ENCODE measurements at regions of chr1 and their contacts with region 1.

Region 1: GRCh38 chr1:221381910-221382623 is 359.8 kb downstream of the DUSP10 start:
- DNase-seq: no peak

Region 2: GRCh38 chr1:220750131-220750515 is 631.9 kb before region 1 on chr1:
- intact Hi-C with region 1: no loop called
- DNase-seq: no peak

Region 3: DNA sequence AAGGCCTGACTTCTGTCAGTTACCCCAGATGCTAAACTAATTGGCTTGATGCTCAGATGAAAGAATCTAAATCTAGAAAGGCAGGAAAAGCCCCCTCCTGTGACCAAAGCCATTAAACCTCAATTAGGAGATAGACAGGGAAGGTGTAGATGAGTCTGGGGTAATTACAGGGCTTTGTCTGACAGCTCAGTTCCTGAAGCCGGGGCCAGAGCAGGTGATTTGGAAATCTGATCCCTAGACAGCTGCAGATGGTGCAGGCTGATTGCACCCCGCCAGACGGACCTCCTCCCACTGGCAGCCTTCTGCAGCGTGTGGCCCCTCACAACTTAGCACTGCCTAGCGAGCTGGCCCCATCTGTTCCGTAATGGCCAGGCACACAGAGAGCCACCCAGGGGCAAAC is 107.7 kb before region 1 on chr1:
- intact Hi-C with region 1: no loop called
- DNase-seq: no peak

Region 4: DNA sequence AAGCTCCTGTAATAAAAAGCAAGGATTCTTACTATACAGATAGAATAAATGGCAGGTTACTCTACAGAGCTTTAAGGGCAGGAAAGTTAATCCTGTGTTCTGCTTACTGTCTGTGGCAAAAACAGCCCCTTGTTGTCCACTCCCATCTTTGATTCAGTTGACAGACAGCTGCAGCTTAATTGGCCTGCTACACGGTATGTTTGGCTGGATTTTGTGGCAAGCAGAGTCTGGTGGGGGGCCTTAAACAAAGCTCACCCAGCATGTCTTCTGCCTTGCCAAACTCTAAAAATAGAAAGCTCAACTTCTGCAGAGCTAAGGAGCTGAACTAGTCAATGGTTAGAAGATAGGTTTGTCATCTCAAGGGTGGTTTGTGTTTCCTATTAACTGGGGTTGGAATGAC is 95.7 kb before region 1 on chr1:
- intact Hi-C with region 1: no loop called
- DNase-seq: no peak

Region 5: DNA sequence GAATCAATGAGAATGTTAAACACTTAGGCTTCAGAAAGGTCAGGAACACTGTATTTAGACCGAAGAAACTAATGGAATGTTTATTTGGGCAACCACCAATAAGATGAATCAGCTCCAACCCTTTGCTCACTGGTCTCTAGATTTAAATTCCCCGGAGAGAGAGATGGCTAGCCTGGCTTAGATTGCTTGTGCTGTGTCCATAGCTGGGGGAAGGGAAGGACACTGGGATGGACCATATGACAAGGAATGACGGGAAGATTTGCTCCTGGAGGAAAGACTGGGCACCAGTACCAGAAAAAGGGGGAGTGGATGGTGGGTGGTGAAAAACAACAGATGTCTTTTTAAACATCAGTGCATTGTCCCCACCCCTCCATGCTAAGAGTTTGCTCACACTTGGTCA is 66.7 kb before region 1 on chr1:
- intact Hi-C with region 1: no loop called
- DNase-seq: no peak

Region 6: GRCh38 chr1:221350091-221350490 is 32.0 kb before region 1 on chr1:
- intact Hi-C with region 1: loop called (anchors 2 kb)
- DNase-seq: no peak

Measured in cardiac septum (tissue), 1 donor.